ENCODE measurements at regions of chr5 and their contacts with region 1.

Region 1: GRCh38 chr5:155147222-155147621 is 133.7 kb downstream of the KIF4B start:
- DNase-seq: no peak
- H3K4me3 ChIP-seq: no peak overlapping the region
- H3K27ac ChIP-seq: no peak overlapping the region
- H3K4me1 ChIP-seq: no peaks in the 10 kb centered on the region
- H3K27me3 ChIP-seq: no peaks in the 10 kb centered on the region
- CTCF ChIP-seq: peak; percentile 30 to 42 (median 40)
- EP300 ChIP-seq: no peak
- POLR2A ChIP-seq: no peak

Region 2: DNA sequence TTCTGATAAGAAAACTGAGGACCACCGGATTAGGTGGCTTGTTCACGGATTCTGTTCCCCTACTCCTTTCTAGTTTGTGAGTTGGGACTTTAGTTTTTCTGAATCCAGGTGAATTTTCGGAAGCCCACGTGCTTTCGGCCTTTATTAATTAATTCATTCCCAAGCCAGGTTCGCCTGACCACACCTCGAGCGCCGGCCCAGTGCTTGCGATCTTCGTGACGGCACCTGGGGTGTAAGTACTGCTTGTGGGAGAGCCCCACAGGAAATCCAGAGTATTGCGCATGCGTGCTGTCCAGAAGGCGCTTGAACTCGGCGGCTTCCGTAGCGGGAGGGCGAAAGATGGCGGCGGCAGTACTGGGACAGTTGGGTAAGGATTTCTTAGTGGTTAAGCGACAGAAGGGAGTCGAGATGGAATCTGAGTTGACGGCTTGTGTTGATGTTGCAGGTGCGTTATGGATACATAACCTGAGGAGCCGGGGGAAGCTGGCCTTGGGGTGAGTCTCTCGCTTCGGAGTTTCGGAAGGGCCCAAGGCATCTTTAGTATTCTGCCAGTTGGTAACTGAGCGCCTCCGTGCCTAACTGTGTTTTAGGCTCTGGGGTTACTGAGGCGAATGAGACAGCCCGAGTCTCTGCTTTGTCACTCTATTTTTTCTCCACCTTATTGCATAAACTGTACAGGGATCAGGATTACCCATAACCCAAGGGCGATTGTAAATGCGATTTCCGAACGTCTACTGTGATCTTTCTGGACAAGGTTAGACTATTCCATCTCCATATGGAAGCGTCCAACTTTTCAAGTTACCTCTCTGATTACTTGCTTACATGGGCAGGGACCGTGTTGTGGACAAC is 206.2 kb before region 1 on chr5 and contains the start of gene MRPL22:
- intact Hi-C with region 1: loop called (anchors 10 kb)
- DNase-seq: peak; percentile 98
- H3K4me3 ChIP-seq: peak within 1 kb of the TSS; percentile 69 to 80 (median 74)
- H3K27ac ChIP-seq: peak within 1 kb of the TSS; percentile 68 to 84 (median 80)
- H3K4me1 ChIP-seq: peaks cover 35 to 64% (median 61%) of the 10 kb centered on the region in 4 donors
- H3K27me3 ChIP-seq: peaks cover 0 to 5% (median 0%) of the 10 kb centered on the region in 4 donors
- CTCF ChIP-seq: peak in 1 of 3 experiments; percentile 11
- EP300 ChIP-seq: no peak
- POLR2A ChIP-seq: no peak
- total RNA-seq, gene MRPL22: 8.7 to 31.4 (median 17.2) TPM

Region 3: GRCh38 chr5:154970759-154971158 is 176.5 kb before region 1 on chr5:
- intact Hi-C with region 1: loop called (anchors 2 kb)
- DNase-seq: no peak
- H3K4me3 ChIP-seq: no peak overlapping the region
- H3K27ac ChIP-seq: no peak overlapping the region
- H3K4me1 ChIP-seq: no peaks in the 10 kb centered on the region
- H3K27me3 ChIP-seq: no peaks in the 10 kb centered on the region
- CTCF ChIP-seq: no peak
- EP300 ChIP-seq: no peak
- POLR2A ChIP-seq: no peak

Region 4: GRCh38 chr5:155103146-155103545 is 44.1 kb before region 1 on chr5:
- intact Hi-C with region 1: no loop called
- DNase-seq: no peak
- H3K4me3 ChIP-seq: no peak overlapping the region
- H3K27ac ChIP-seq: no peak overlapping the region
- H3K4me1 ChIP-seq: no peaks in the 10 kb centered on the region
- H3K27me3 ChIP-seq: no peaks in the 10 kb centered on the region
- CTCF ChIP-seq: no peak
- EP300 ChIP-seq: no peak
- POLR2A ChIP-seq: no peak

Region 5: GRCh38 chr5:156824800-156825199 is 1677.6 kb after region 1 on chr5:
- intact Hi-C with region 1: loop called (anchors 10 kb)
- DNase-seq: no peak
- H3K4me3 ChIP-seq: no peak overlapping the region
- H3K27ac ChIP-seq: no peak overlapping the region
- H3K4me1 ChIP-seq: no peaks in the 10 kb centered on the region
- H3K27me3 ChIP-seq: no peaks in the 10 kb centered on the region
- CTCF ChIP-seq: peak; percentile 49 to 66 (median 52)
- EP300 ChIP-seq: no peak
- POLR2A ChIP-seq: no peak